T-cell (primary cell): ENCODE measurements at regions of chr1 and their contacts with region 1.

Region 1: GRCh38 chr1:154994591-154994990 is 1.2 kb downstream of the LENEP start:
- DNase-seq: no peak
- ATAC-seq: no peak
- H3K4me3 ChIP-seq: no peak overlapping the region
- H3K4me3 Mint-ChIP-seq: no peak overlapping the region
- H3K27ac ChIP-seq: no peak overlapping the region
- H3K27ac Mint-ChIP-seq: peak overlapping the region in 1 of 2 donors; percentile 28
- H3K4me1 ChIP-seq: peaks cover 6 to 26% of the 10 kb centered on the region in 2 experiments
- H3K4me1 Mint-ChIP-seq: peaks cover 19 to 24% (median 23%) of the 10 kb centered on the region in 3 donors
- H3K27me3 ChIP-seq: no peaks in the 10 kb centered on the region
- H3K27me3 Mint-ChIP-seq: no peaks in the 10 kb centered on the region

Region 2: DNA sequence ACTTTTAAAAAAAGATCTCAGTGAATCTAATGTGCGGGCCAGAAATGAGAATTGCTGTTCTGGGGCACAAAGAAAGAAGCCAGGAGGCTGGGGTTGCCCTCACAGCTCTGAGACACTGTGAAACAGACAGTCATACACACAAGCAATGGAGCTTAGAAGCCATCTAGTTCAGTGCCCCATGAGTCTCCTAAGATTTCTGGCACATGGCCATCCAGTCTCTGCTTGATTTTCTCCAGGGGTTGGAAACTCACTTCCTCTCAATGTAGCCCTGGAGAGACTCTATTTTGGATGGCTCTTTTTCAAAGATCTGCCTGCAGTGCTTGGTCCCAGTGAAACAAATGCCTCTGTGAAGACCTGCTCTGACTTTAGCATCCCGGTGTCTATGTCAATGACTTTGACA is 163.1 kb before region 1 on chr1:
- CTCF ChIA-PET with region 1: no interaction called
- POLR2A ChIA-PET with region 1: no interaction called
- DNase-seq: no peak
- ATAC-seq: no peak
- H3K4me3 ChIP-seq: no peak overlapping the region
- H3K4me3 Mint-ChIP-seq: no peak overlapping the region
- H3K27ac ChIP-seq: no peak overlapping the region
- H3K27ac Mint-ChIP-seq: no peak overlapping the region
- H3K4me1 ChIP-seq: no peaks in the 10 kb centered on the region
- H3K4me1 Mint-ChIP-seq: no peaks in the 10 kb centered on the region
- H3K27me3 ChIP-seq: peaks cover 0 to 27% of the 10 kb centered on the region in 2 experiments
- H3K27me3 Mint-ChIP-seq: peaks cover 0 to 4% of the 10 kb centered on the region in 2 donors

Region 3: DNA sequence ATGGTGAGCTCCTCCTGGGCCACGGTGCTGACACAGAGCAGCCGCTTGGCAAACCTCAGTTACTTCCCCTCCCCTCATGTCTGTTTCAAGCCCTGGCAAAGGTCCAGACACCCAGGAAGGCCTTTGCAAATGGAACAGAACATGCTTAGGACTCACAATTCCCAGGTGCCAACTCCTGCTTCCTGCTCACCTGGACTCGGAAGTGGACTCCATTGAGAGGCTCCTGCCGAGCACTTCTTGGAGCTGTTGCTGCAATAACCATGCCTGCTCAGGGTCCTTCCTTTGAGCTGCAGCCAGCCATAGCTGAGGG is 28.3 kb after region 1 on chr1:
- CTCF ChIA-PET with region 1: interaction called, 3 to 15 read pairs
- POLR2A ChIA-PET with region 1: interaction called in 1 of 2 experiments, 11 read pairs
- DNase-seq: no peak
- ATAC-seq: no peak
- H3K4me3 ChIP-seq: no peak overlapping the region
- H3K4me3 Mint-ChIP-seq: no peak overlapping the region
- H3K27ac ChIP-seq: no peak overlapping the region
- H3K27ac Mint-ChIP-seq: peak overlapping the region in 1 of 2 donors; percentile 34
- H3K4me1 ChIP-seq: peaks cover 5 to 9% of the 10 kb centered on the region in 2 experiments
- H3K4me1 Mint-ChIP-seq: peaks cover 17 to 37% (median 29%) of the 10 kb centered on the region in 3 donors
- H3K27me3 ChIP-seq: no peaks in the 10 kb centered on the region
- H3K27me3 Mint-ChIP-seq: no peaks in the 10 kb centered on the region

Region 4: DNA sequence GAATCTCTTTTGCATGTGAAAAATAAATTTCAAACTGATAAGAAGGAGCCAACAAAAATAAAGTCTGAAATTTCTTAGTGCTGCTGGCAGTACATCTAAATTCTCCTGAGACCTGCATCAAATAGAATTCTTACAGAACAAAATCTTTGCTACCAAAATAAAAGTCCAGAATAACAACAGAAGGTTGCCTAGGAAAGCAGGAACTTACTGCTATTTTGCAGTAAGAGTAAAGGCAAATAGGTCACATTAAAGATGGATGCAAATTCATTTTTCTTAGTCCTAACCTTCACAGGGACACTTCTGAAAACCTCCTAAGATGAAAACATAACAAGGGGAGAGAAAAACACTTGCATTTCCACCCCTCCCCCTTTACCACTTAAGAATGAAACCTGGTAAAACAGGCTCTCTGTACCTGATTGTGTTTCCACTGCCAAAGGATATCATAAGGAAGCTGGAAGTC is 385.1 kb after region 1 on chr1:
- CTCF ChIA-PET with region 1: no interaction called
- POLR2A ChIA-PET with region 1: no interaction called
- DNase-seq: peak in 1 of 35 experiments; percentile 21
- ATAC-seq: no peak
- H3K4me3 ChIP-seq: no peak overlapping the region
- H3K4me3 Mint-ChIP-seq: no peak overlapping the region
- H3K27ac ChIP-seq: no peak overlapping the region
- H3K27ac Mint-ChIP-seq: peak overlapping the region; percentile 20 to 52
- H3K4me1 ChIP-seq: no peaks in the 10 kb centered on the region
- H3K4me1 Mint-ChIP-seq: peaks cover 8 to 9% (median 9%) of the 10 kb centered on the region in 3 donors
- H3K27me3 ChIP-seq: no peaks in the 10 kb centered on the region
- H3K27me3 Mint-ChIP-seq: no peaks in the 10 kb centered on the region

Region 5: DNA sequence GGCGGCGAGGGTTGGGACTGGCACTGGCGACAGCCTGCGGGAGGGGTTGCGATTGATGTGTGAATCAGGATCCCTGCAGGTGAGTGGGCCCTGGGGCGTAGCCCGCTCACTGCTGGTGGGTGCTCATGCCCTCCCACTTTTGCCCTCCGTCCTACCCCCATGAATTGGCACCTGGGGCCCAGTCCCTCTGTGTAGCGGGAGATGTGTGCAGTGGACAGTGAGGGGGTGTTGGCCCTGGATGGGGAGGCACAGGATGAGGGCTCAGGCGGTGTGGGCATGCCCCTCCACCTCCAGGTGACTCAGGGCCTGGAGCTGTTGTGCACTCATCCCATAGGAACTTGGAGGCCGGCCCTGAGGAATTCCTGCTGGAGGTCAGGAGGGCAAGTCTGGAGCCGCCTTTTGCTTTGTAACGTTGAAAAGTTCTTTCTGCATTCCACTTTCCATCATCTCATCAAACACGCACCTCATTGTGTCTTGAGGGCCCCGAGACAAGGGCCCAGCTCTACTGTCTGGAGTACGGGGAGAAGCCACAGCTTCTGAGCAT is 1902.0 kb after region 1 on chr1:
- CTCF ChIA-PET with region 1: no interaction called
- POLR2A ChIA-PET with region 1: no interaction called
- DNase-seq: no peak
- ATAC-seq: no peak
- H3K4me3 ChIP-seq: no peak overlapping the region
- H3K4me3 Mint-ChIP-seq: no peak overlapping the region
- H3K27ac ChIP-seq: no peak overlapping the region
- H3K27ac Mint-ChIP-seq: peak overlapping the region in 1 of 2 donors; percentile 43
- H3K4me1 ChIP-seq: peaks cover 4 to 32% of the 10 kb centered on the region in 2 experiments
- H3K4me1 Mint-ChIP-seq: peaks cover 17 to 24% (median 22%) of the 10 kb centered on the region in 3 donors
- H3K27me3 ChIP-seq: peaks cover 0 to 95% of the 10 kb centered on the region in 2 experiments
- H3K27me3 Mint-ChIP-seq: peaks cover 14 to 57% of the 10 kb centered on the region in 2 donors